ENCODE measurements at regions of chr2 and their contacts with region 1.

Region 1: GRCh38 chr2:54723131-54723995 is at the start of gene EML6:
- DNase-seq: peak; percentile 96
- ATAC-seq: peak; percentile 97
- H3K4me3 ChIP-seq: peak within 1 kb of the TSS; percentile 78 to 80
- H3K27ac ChIP-seq: peak within 1 kb of the TSS; percentile 61
- H3K4me1 ChIP-seq: peaks cover 3 to 20% of the 10 kb centered on the region in 2 experiments; a peak in 3 of 4 replicates
- H3K27me3 ChIP-seq: no peaks in the 10 kb centered on the region
- CTCF ChIP-seq: peak in 2 of 3 experiments; percentile 14 to 22; a peak in 1 of 6 replicates
- POLR2A ChIP-seq: peak; percentile 46
- RAD21 ChIP-seq: no peak
- total RNA-seq, gene EML6: 6.6 TPM

Region 2: GRCh38 chr2:54226221-54226620 is 497.1 kb before region 1 on chr2:
- CTCF ChIA-PET with region 1: no interaction called
- POLR2A ChIA-PET with region 1: no interaction called
- RAD21 ChIA-PET with region 1: no interaction called
- intact Hi-C with region 1: no loop called
- DNase-seq: no peak
- ATAC-seq: no peak
- H3K4me3 ChIP-seq: no peak overlapping the region
- H3K27ac ChIP-seq: no peak overlapping the region
- H3K4me1 ChIP-seq: no peaks in the 10 kb centered on the region
- H3K27me3 ChIP-seq: no peaks in the 10 kb centered on the region
- CTCF ChIP-seq: no peak
- POLR2A ChIP-seq: no peak
- RAD21 ChIP-seq: no peak

Region 3: DNA sequence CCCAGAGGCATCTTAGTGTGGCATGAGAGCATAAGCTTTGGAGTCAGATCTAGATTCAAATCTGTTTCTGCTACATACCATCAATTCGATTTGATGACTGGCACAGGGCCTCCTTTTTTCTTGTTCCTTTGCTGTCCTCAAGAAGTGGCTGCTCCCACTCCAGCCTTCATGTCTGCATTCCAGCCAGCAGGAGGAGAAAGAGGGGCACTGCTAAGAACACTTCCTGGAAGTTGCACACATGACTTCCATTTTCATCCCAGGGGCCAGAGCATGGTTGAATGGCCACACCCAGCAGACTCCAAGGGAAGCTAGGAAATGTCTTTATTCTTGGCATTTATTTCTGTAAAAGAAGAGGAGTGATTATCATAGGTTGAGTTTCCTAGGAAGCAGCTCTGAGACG is 50.5 kb after region 1 on chr2:
- CTCF ChIA-PET with region 1: no interaction called
- POLR2A ChIA-PET with region 1: no interaction called
- RAD21 ChIA-PET with region 1: no interaction called
- intact Hi-C with region 1: loop called (anchors 5 kb)
- DNase-seq: peak; percentile 44
- ATAC-seq: peak; percentile 63
- H3K4me3 ChIP-seq: no peak overlapping the region
- H3K27ac ChIP-seq: no peak overlapping the region
- H3K4me1 ChIP-seq: peaks cover 0 to 43% of the 10 kb centered on the region in 2 experiments; a peak in 2 of 4 replicates
- H3K27me3 ChIP-seq: no peaks in the 10 kb centered on the region
- CTCF ChIP-seq: peak in 2 of 3 experiments; percentile 53 to 67; a peak in 4 of 6 replicates
- POLR2A ChIP-seq: no peak
- RAD21 ChIP-seq: no peak

Region 4: DNA sequence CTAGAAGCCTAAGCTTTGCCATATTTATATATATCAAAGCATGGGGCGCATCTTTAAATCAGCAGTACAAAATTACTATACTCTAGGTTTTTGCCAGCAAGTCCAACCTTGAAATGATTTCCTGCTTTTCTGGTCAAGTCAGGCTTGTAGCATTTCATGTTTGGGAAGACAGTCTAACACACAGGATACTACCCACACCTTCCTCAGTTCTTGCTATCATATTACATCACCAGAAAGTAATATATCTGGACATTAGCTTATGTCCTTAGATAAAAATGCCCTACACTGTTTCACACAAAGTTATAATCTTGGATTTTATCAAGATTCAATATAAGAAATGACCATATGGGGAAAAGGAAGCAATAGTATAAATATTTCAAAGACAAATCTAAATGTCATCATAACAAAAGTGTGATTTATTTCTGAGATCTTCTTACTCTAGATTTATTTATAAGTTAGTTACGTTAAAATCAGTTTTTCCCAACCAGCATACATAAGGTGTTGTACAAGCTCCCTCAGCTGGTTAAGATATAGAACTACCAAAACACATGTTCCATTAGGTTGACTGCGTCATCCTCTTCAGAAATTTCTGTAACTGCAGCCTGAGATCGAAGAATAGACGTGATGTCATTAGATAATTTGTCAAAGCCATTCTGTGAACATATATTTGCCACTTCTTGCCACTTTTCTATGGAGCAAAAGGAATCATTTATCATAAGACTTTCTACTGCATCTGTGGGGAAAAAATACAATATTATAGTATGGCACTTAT is 452.1 kb after region 1 on chr2:
- CTCF ChIA-PET with region 1: no interaction called
- POLR2A ChIA-PET with region 1: no interaction called
- RAD21 ChIA-PET with region 1: no interaction called
- intact Hi-C with region 1: loop called (anchors 5 kb)
- DNase-seq: peak; percentile 37
- ATAC-seq: peak; percentile 81
- H3K4me3 ChIP-seq: no peak overlapping the region
- H3K27ac ChIP-seq: no peak overlapping the region
- H3K4me1 ChIP-seq: no peaks in the 10 kb centered on the region; a peak in 1 of 4 replicates
- H3K27me3 ChIP-seq: no peaks in the 10 kb centered on the region
- CTCF ChIP-seq: peak; percentile 34 to 69 (median 66); a peak in 4 of 6 replicates
- POLR2A ChIP-seq: no peak
- RAD21 ChIP-seq: peak; percentile 90

Region 5: DNA sequence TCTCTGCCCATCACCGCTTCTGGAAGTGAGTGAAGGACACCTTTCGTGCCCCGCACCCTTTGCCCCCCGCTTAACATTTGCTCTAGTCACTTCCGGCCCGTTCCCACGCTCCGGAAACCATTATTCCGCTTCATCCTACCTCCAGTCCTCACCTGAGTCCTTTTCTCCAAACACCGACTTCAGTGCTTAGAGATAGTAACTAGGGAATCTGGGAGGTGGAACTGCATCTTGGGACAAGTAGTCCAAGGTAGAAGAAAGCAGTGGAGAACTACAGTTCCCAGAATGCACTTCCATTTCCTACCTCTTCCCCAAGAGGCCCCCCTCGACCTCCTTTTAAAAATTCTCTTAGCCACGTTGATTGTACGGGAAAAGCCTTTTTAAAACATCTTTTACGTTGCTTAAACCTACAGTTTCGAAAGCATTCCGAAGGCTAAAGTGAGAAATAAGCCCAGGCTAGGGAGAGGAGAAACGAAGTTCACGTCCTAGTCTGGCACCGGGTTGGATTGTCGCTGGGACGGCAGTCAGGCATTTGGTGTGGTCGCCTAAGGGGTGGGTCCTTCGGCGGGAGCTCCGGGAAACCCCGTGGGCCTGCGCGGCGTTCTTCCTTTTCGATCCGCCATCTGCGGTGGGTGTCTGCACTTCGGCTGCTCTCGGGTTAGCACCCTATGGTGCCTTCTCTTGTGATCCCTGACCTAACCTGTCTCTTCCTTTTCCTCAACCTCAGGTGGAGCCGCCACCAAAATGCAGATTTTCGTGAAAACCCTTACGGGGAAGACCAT is 508.9 kb after region 1 on chr2 and contains the starts of genes CLHC1 and RPS27A:
- CTCF ChIA-PET with region 1: no interaction called
- POLR2A ChIA-PET with region 1: no interaction called
- RAD21 ChIA-PET with region 1: no interaction called
- intact Hi-C with region 1: no loop called
- DNase-seq: peak; percentile 98
- ATAC-seq: peak; percentile 89
- H3K4me3 ChIP-seq: peak within 1 kb of the TSS; percentile 77 to 91
- H3K27ac ChIP-seq: peak within 1 kb of the TSS; percentile 98
- H3K4me1 ChIP-seq: peaks cover 8 to 21% of the 10 kb centered on the region in 2 experiments
- H3K27me3 ChIP-seq: no peaks in the 10 kb centered on the region
- CTCF ChIP-seq: no peak
- POLR2A ChIP-seq: peak; percentile 73
- RAD21 ChIP-seq: no peak
- total RNA-seq, gene CLHC1: 11.1 TPM
- total RNA-seq, gene RPS27A: 1,291 TPM